H1 (cell line): ENCODE measurements at regions of chr16 and their contacts with region 1.

Region 1: DNA sequence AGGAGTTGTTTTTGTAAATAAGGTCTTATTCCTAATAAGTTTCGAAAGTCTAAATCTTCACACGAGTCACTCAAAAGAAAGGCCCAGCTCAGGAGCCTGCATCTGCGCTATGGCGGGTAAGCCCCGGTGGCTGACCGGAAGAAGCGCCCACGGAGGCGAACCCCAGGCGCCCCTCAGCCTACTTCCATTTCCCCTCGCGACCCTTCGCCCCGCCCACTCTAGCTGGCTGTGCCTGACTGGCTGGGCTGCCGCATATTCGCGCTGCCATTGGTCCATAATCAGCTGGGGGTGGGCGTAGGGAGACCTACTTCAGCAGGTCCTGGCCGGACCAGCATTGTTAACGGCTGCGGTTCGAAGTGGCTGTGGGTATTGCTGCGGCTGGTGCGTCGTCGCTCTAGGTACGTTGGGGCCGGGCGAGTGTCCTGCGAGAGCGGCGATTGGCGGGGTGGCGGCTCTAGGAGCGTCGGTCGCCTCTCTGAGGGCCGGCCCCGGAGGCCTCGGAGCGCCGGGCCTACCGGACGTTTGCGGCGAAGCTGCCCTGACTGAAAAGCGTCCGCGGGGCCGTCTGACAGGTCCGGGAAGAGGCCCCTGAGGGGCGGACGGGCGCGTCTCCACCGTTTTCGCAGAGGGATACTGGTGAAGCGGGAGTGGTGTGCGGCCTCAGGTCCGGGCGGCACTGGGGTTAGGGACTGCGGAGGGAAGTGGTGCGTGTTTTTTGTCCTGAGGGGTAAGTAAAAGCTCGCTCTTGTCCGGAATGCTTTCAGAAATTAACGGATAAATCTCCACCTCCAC is at the start of gene ATF7IP2:
- DNase-seq: peak; percentile 89 to 96
- H3K4me3 ChIP-seq: peak within 1 kb of the TSS; percentile 65 to 97 (median 89)
- H3K27ac ChIP-seq: no peak within 1 kb of the TSS
- H3K4me1 ChIP-seq: peaks cover 0 to 5% (median 2%) of the 10 kb centered on the region in 4 experiments; a peak in 3 of 7 replicates
- H3K27me3 ChIP-seq: no peaks in the 10 kb centered on the region
- CTCF ChIP-seq: no peak
- EP300 ChIP-seq: no peak
- POLR2A ChIP-seq: peak; percentile 93 to 98
- RAD21 ChIP-seq: no peak
- total RNA-seq, gene ATF7IP2: 32.8 and 38.2 TPM in 2 replicates

Region 2: DNA sequence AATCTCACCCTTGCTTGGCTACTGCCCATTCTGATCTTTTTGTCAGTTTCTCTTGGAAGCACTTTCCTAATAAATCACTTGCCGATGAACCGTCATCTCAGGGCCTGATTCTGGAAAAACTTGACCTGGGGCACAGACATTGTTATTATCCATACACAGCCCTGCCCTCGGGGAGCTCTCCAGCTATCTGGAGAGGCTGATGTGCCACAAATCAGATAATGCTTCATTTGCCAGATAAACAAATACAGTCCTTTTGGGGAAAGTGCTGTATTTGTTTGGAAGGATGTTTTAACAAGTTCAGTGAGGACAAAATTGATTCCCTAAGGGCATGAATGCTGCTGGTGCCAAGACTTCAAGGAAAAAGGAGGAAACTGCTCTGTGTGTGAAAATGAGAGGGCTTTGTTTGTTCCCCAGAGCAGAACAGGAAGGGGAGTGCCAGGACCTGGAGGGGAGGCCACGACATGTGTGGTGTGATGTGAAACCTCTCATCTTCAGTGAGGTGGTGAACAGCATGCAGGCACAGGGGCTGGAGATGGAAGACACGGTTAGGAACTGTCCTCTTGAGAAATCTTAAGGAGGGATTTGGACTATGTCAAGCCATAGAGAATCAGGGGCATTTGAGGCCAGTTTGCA is 157.3 kb before region 1 on chr16:
- CTCF ChIA-PET with region 1: no interaction called
- POLR2A ChIA-PET with region 1: no interaction called
- DNase-seq: no peak
- H3K4me3 ChIP-seq: no peak overlapping the region
- H3K27ac ChIP-seq: no peak overlapping the region
- H3K4me1 ChIP-seq: no peaks in the 10 kb centered on the region
- H3K27me3 ChIP-seq: no peaks in the 10 kb centered on the region
- CTCF ChIP-seq: no peak
- EP300 ChIP-seq: no peak
- POLR2A ChIP-seq: no peak
- RAD21 ChIP-seq: no peak

Region 3: DNA sequence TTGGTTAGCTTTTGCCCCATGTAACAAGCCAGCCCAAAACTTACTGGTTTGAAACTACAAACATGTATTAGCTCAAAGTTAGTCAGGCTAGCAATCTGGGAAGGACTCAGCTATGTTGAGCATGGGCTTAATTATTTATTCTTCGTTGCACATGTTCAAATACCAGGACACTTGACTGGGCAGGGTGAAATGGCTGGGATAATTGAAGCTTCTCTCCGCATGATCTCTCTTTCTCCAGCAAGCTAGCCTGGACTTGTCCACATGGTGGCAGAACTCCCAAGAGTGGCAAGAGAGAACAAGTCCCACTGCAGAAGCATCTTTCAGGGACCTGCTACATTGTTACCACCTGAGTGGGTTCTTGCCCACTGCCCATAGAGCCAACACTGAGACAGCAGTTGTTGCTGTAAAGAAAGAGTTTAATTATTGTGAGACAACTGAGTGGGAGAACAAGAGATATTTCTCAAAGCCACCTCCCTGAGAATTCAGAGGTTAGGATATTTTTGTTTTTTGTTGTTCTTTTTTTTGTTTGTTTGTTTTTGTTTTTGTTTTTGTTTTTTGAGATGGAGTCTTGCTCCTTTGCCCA is 16.9 kb before region 1 on chr16:
- CTCF ChIA-PET with region 1: interaction called, 5 read pairs
- POLR2A ChIA-PET with region 1: interaction called, 12 read pairs
- DNase-seq: no peak
- H3K4me3 ChIP-seq: no peak overlapping the region
- H3K27ac ChIP-seq: no peak overlapping the region
- H3K4me1 ChIP-seq: no peaks in the 10 kb centered on the region; a peak in 1 of 7 replicates
- H3K27me3 ChIP-seq: no peaks in the 10 kb centered on the region
- CTCF ChIP-seq: peak; percentile 37 to 54 (median 44)
- EP300 ChIP-seq: no peak
- POLR2A ChIP-seq: no peak
- RAD21 ChIP-seq: peak; percentile 49 to 71

Region 4: GRCh38 chr16:10412935-10413601 is 27.1 kb after region 1 on chr16:
- CTCF ChIA-PET with region 1: no interaction called
- POLR2A ChIA-PET with region 1: no interaction called
- DNase-seq: no peak
- H3K4me3 ChIP-seq: no peak overlapping the region
- H3K27ac ChIP-seq: no peak overlapping the region
- H3K4me1 ChIP-seq: no peaks in the 10 kb centered on the region
- H3K27me3 ChIP-seq: no peaks in the 10 kb centered on the region
- CTCF ChIP-seq: no peak
- EP300 ChIP-seq: no peak
- POLR2A ChIP-seq: no peak
- RAD21 ChIP-seq: no peak